MCF 10A (cell line): ENCODE measurements at regions of chr2 and their contacts with region 1.

Region 1: DNA sequence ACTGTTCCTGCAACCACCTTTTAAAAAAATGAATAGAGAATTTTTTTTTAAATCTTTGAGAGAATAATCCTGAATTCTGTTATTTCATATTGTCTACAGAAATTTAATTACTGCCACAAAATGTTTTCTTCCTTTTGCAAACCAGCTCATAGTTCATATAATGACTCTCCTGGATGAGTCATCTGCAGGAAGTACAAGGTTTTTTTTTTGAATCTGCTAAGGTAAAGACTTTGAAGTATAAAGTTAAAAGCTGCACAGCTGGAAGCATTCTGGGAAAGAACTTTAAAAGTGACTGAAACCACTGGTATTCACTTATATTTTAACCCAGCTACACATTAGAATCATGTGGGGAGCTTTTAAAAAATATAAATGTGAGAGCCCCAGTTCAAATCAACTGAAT is 25.4 kb downstream of the SESTD1 start:
- DNase-seq: peak; percentile 57
- H3K4me3 Mint-ChIP-seq: no peak overlapping the region
- H3K27ac Mint-ChIP-seq: no peak overlapping the region
- H3K4me1 Mint-ChIP-seq: peaks cover 49% of the 10 kb centered on the region
- H3K27me3 Mint-ChIP-seq: no peaks in the 10 kb centered on the region
- CTCF ChIP-seq: no peak

Region 2: DNA sequence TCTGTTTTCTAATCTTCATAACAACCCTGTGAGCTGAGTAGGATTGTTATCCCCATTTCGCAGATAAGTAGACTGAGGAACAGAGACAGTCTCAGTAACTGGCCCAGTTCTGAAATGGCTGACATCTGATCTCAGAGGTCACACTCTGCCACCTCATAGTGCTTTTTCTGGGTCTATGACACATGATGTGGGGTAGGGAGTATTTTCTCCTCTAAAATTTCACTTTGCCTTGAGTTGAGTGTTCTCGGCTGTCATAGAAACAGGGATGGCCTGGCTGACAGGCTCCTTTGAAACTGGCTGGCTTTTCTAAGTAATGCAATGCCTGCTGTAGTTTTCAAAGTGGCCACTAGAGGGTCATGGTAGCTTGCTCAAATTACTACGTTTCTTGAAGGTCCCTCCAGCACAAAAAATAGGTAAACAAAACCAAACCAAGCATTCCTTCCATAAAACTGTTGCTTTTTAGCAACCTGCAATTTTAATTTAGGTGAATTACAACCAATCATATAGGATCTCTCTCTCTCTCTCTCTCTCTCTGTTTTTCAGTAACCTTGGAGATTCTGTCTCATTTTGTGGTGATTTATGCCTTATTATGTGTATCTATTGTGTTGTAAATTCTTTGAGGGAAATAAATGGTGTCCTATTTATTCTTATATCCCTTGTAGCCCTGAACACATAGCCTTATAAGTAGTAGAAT is 347.8 kb before region 1 on chr2:
- CTCF ChIA-PET with region 1: no interaction called
- POLR2A ChIA-PET with region 1: no interaction called
- intact Hi-C with region 1: no loop called
- DNase-seq: peak; percentile 76
- H3K4me3 Mint-ChIP-seq: no peak overlapping the region
- H3K27ac Mint-ChIP-seq: no peak overlapping the region
- H3K4me1 Mint-ChIP-seq: no peaks in the 10 kb centered on the region
- H3K27me3 Mint-ChIP-seq: no peaks in the 10 kb centered on the region
- CTCF ChIP-seq: peak; percentile 80

Region 3: DNA sequence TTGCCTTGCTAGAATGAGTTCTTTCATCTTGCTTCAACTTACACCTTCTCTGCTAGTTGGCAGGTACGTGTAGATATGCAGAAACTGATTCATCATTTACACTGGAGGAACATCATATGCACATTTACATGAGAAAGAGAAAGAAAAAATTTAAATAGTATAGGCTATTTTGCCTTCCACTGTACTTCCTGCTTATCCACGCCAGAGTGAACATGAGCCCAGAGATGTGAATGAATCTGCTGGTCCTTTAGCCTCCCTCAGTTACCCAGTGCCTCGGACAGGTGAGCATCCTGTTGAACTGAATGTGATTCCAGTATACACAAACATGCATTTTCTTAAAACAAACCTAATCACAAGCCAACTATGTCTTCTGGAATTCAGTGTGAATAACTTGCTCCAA is 58.2 kb before region 1 on chr2:
- CTCF ChIA-PET with region 1: no interaction called
- POLR2A ChIA-PET with region 1: no interaction called
- intact Hi-C with region 1: no loop called
- DNase-seq: no peak
- H3K4me3 Mint-ChIP-seq: no peak overlapping the region
- H3K27ac Mint-ChIP-seq: no peak overlapping the region
- H3K4me1 Mint-ChIP-seq: peaks cover 13% of the 10 kb centered on the region
- H3K27me3 Mint-ChIP-seq: no peaks in the 10 kb centered on the region
- CTCF ChIP-seq: no peak

Region 4: DNA sequence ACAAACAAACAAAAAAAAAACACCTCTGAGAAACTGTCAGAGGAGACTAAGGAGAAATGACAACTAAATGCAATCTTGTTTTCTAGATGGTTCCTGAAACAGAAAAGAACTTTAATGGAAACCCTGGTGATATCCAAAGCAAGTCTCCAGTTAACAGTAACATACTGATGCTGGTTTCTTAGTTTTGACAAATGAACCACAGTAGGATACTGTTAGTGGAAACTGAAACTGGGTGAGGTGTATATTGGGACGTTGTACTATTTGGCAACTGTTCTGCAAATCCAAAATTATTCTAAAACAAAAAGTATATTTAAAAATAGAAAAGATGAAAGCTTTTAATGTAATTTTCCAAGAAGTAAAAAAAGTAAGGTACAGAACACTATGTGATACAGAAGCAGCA is 14.0 kb after region 1 on chr2:
- CTCF ChIA-PET with region 1: interaction called, 11 read pairs
- POLR2A ChIA-PET with region 1: interaction called, 17 read pairs
- intact Hi-C with region 1: no loop called
- DNase-seq: no peak
- H3K4me3 Mint-ChIP-seq: no peak overlapping the region
- H3K27ac Mint-ChIP-seq: peak overlapping the region; percentile 70
- H3K4me1 Mint-ChIP-seq: peaks cover 28% of the 10 kb centered on the region
- H3K27me3 Mint-ChIP-seq: no peaks in the 10 kb centered on the region
- CTCF ChIP-seq: no peak

Region 5: DNA sequence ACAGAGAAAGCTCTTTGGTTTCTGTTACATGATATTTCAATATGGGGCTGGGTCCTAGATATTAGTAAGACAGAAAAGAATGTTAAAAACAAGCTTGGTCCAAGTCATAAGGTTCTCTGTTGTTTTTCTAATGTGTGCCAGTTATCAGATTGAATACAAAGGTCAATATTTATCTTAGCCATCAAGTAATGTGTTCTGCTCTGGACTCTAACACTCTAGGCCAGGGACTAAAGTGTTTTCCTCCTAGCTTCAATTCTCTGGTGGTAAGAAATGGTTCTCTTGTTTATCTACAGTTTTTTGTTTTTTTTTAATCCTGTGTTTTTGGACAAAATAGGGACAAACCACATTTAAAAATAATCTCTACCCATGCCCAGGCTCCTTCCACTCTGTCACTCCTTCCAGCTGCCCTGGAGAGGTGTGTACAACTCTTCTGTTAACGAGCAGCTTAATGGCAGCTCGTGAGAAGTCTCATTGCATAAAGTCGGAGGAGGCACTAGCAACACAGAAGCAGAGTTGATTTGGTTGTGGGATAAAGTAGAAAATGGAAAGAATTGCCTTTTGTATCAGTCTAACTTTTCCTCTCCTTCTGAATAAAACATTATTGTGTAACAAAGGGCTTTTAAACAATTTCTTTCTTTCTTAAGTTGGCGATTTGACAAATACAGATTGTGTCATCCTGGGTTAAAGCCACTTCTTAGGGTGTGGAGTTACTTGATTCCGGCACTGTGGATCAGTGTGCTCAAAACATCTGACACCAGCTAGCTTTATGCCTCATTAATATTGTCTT is 33.4 kb after region 1 on chr2:
- CTCF ChIA-PET with region 1: interaction called, 4 read pairs
- POLR2A ChIA-PET with region 1: interaction called, 20 read pairs
- intact Hi-C with region 1: no loop called
- DNase-seq: peak; percentile 88
- H3K4me3 Mint-ChIP-seq: peak overlapping the region; percentile 39
- H3K27ac Mint-ChIP-seq: peak overlapping the region; percentile 95
- H3K4me1 Mint-ChIP-seq: peaks cover 57% of the 10 kb centered on the region
- H3K27me3 Mint-ChIP-seq: no peaks in the 10 kb centered on the region
- CTCF ChIP-seq: no peak